ENCODE measurements at regions of chr17 and their contacts with region 1.

Region 1: GRCh38 chr17:50547035-50547735 is at the start of gene SPATA20:
- DNase-seq: peak; percentile 82 to 89
- H3K4me3 ChIP-seq: peak within 1 kb of the TSS; percentile 68
- H3K27ac ChIP-seq: no peak within 1 kb of the TSS
- H3K4me1 ChIP-seq: peaks cover 17% of the 10 kb centered on the region
- H3K27me3 ChIP-seq: no peaks in the 10 kb centered on the region
- CTCF ChIP-seq: peak; percentile 99
- total RNA-seq, gene SPATA20: 41.5 and 60.5 TPM in 2 replicates

Region 2: GRCh38 chr17:50626037-50626574 is 78.9 kb after region 1 on chr17:
- CTCF ChIA-PET with region 1: interaction called, 6 read pairs
- POLR2A ChIA-PET with region 1: interaction called, 9 read pairs
- intact Hi-C with region 1: loop called (anchors 2 kb)
- DNase-seq: peak; percentile 50 to 52
- H3K4me3 ChIP-seq: no peak overlapping the region
- H3K27ac ChIP-seq: no peak overlapping the region
- H3K4me1 ChIP-seq: peaks cover 31% of the 10 kb centered on the region
- H3K27me3 ChIP-seq: no peaks in the 10 kb centered on the region
- CTCF ChIP-seq: peak; percentile 91

Region 3: GRCh38 chr17:50707289-50708049 is 160.3 kb after region 1 on chr17 and contains the start of gene ANKRD40:
- CTCF ChIA-PET with region 1: interaction called, 17 read pairs
- POLR2A ChIA-PET with region 1: no interaction called
- intact Hi-C with region 1: no loop called
- DNase-seq: peak; percentile 85 to 92
- H3K4me3 ChIP-seq: peak within 1 kb of the TSS; percentile 79
- H3K27ac ChIP-seq: peak within 1 kb of the TSS; percentile 86
- H3K4me1 ChIP-seq: peaks cover 26% of the 10 kb centered on the region
- H3K27me3 ChIP-seq: no peaks in the 10 kb centered on the region
- CTCF ChIP-seq: no peak
- total RNA-seq, gene ANKRD40: 24.4 and 33.5 TPM in 2 replicates

Region 4: DNA sequence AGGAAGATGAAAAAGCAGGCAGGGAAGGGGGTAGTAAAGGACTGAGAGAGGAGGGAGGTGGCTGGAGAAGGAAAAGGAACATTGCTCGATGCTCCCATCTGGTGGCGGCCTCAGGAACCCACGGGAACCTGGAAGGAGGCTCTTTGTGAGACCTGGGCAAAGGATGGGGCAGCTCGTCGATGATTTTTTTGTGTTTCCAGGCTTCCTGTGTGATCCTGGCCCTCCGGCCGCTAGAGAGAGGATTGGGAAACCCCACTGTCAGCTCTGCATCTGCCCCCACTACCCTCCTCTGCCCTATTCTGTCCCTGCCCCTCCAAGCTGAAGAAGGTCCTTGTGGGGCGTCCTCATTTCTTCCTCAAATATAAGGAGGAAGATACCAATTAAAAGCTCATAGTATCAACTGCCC is 294.8 kb after region 1 on chr17:
- CTCF ChIA-PET with region 1: no interaction called
- POLR2A ChIA-PET with region 1: no interaction called
- intact Hi-C with region 1: loop called (anchors 1 kb)
- DNase-seq: peak; percentile 43 to 76
- H3K4me3 ChIP-seq: no peak overlapping the region
- H3K27ac ChIP-seq: no peak overlapping the region
- H3K4me1 ChIP-seq: peaks cover 18% of the 10 kb centered on the region
- H3K27me3 ChIP-seq: no peaks in the 10 kb centered on the region
- CTCF ChIP-seq: peak; percentile 83

Region 5: DNA sequence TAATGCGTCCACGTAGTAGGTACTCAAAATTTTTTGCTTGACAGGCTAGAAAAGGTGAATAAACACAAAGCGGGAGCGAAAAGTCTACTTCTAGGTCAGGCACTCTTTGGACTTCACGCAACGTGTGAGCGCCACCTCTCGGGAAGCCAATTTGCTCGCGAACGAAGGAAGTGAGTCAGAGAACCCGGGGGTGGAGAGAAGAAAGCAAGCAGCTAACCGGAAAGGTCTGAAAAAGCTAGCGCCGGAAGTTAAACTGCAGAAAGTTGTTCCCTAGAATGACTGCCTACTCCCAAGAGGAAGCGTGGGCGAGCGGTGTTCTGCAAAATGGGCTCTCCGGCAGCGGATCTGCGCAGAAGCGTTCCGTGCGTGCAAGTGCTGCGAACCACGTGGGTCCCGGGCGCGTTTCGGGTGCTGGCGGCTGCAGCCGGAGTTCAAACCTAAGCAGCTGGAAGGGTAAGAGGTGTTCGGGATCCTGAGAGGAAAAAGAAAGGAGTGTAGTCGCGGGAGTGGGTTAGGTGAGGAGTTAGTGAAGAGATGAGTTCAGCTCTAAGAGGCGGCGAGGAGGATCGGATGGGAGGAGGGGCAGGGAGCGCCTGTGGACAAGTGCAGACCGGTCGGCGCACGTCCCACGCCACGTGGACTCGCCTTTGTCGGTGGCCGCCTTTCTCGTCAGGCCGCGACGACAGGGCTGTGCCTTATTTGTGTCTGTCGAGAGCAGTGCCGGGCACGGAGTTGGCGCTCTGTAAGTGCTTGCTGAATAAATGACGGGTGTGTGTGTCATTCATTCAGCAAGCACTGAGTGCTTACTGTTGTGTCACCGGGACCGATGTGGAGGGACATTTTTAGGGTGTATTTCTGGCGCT is 606.3 kb after region 1 on chr17 and contains the start of gene NME1:
- CTCF ChIA-PET with region 1: no interaction called
- POLR2A ChIA-PET with region 1: no interaction called
- intact Hi-C with region 1: loop called (anchors 1 kb)
- DNase-seq: peak; percentile 96 to 99
- H3K4me3 ChIP-seq: peak within 1 kb of the TSS; percentile 72
- H3K27ac ChIP-seq: peak within 1 kb of the TSS; percentile 78
- H3K4me1 ChIP-seq: peaks cover 22% of the 10 kb centered on the region
- H3K27me3 ChIP-seq: no peaks in the 10 kb centered on the region
- CTCF ChIP-seq: peak; percentile 86
- total RNA-seq, gene NME1: 115 and 172 TPM in 2 replicates

Measured in PC-9 (cell line).